ENCODE measurements at regions of chr1 and their contacts with region 1.

Region 1: DNA sequence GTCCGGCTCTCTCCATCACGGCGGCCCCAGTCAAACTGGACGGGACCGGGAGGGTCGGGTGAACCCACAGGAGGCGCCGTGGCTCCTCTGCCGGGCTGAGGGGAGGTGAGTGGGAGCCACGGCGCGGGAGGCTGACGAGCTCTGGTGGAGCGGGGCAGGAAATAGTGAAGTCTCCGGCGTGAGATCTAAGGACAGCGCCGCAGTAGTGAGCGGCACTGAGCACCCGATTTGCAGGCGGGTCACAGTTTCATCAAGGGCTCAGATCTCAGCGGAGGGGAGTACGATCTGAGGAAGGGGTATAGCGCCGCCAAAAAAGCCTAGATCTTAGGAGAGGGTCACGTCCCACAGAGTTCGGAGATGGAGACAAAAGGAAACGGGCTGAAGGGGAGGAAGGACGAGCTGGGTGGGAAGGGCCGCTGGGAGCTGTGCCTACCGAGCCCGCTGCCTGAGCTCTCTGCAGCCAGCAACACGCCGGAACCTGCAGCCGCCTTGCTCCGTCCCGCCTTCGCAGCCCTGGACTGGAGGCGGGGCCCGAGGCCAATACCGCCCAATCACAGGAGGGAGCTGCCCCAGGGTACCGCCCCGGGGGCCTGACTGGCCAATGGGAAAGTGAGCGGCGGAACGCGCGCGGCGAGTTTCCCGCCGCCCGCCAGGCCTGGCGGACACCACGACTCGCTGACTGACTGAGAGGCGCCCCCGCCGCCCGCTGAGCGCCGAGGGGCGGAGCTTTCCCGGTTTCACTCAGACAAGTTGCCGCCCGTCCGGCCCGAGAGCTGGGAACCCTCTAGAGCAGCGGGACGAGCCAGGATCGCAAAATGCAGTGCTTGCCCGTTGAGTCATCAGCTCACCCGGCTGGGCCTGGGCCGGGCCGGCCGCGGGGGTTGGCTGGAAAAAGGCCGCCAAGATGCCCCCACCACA is 1.9 kb downstream of the SFN start:
- H3K4me3 ChIP-seq: peak overlapping the region; percentile 59
- H3K27ac ChIP-seq: peak overlapping the region; percentile 61
- H3K4me1 ChIP-seq: 0 out of 2 replicates have a peak, but pooled peaks cover 2% of the 10 kb centered on the region
- CTCF ChIP-seq: peak; percentile 76

Region 2: GRCh38 chr1:26848947-26849774 is 15.7 kb before region 1 on chr1:
- CTCF ChIA-PET with region 1: interaction called, 6 read pairs
- POLR2A ChIA-PET with region 1: interaction called, 10 read pairs
- H3K4me3 ChIP-seq: no peak overlapping the region
- H3K27ac ChIP-seq: no peak overlapping the region
- H3K4me1 ChIP-seq: no peaks in the 10 kb centered on the region
- CTCF ChIP-seq: no peak

Region 3: DNA sequence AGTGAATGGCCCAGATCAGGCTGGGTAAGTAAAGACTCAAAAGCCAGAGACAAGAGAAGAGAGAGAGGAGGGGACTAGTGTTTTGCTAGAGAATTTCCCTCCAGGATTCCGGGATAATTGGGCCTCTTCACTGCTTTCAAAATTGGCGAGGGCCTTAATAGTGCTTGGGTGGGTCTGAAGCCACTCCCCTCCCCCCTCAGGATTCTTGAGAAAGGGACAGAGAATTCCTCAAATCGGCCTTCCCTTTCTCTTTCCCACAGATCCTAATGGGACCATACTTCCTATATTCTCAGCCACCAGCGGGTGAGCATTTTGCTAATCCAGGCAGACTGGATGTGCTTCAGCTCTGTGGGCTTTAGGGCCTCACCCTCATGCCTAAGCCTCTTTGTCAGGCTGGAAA is 10.0 kb after region 1 on chr1:
- CTCF ChIA-PET with region 1: interaction called, 11 read pairs
- POLR2A ChIA-PET with region 1: interaction called, 14 read pairs
- H3K4me3 ChIP-seq: no peak overlapping the region
- H3K27ac ChIP-seq: no peak overlapping the region
- H3K4me1 ChIP-seq: no peaks in the 10 kb centered on the region
- CTCF ChIP-seq: no peak

Region 4: DNA sequence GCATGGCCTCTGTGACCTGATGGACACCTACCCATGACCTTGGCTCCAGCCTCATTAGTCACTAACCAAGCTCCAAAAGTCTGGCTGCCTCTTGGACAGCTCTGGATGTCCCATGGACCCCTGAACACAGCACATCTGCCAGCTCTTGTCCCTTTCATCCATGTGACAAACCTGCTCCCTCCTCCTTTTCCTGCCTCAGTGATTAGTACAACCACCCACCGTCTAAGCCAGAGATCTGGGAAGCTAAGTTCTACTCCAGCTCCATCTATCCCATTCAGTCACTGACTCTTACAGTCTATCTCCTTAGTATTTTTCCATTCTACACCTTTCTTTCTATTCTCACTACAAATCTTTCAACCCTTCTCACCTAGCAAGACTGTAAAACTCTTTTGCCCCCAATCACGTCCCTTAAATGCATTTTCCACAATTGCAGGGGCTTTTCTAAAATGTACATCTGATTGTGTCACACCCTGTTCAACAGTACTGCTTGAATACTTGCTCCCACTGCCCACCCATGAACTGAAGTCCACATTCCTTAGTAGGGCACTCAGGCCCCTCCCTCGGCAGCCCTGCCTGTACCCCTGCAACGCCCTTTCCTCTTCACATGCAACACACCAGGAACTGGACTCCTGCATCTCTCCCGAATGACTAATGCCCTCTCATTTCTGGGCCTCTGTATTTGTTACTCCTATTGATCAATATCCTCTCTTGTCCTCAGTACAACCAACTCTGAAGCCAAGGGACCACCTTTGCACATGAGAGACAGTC is 18.0 kb after region 1 on chr1:
- CTCF ChIA-PET with region 1: interaction called, 11 read pairs
- POLR2A ChIA-PET with region 1: interaction called, 20 read pairs
- H3K4me3 ChIP-seq: no peak overlapping the region
- H3K27ac ChIP-seq: no peak overlapping the region
- H3K4me1 ChIP-seq: no peaks in the 10 kb centered on the region
- CTCF ChIP-seq: no peak